ENCODE measurements at regions of chr22 and their contacts with region 1.

Region 1: GRCh38 chr22:30423982-30424963 is 1.3 kb upstream of the MTFP1 start:
- DNase-seq: peak; percentile 98
- H3K4me3 Mint-ChIP-seq: peak overlapping the region; percentile 95
- H3K27ac Mint-ChIP-seq: peak overlapping the region; percentile 99
- H3K4me1 Mint-ChIP-seq: peaks cover 57% of the 10 kb centered on the region
- H3K27me3 Mint-ChIP-seq: no peaks in the 10 kb centered on the region

Region 2: DNA sequence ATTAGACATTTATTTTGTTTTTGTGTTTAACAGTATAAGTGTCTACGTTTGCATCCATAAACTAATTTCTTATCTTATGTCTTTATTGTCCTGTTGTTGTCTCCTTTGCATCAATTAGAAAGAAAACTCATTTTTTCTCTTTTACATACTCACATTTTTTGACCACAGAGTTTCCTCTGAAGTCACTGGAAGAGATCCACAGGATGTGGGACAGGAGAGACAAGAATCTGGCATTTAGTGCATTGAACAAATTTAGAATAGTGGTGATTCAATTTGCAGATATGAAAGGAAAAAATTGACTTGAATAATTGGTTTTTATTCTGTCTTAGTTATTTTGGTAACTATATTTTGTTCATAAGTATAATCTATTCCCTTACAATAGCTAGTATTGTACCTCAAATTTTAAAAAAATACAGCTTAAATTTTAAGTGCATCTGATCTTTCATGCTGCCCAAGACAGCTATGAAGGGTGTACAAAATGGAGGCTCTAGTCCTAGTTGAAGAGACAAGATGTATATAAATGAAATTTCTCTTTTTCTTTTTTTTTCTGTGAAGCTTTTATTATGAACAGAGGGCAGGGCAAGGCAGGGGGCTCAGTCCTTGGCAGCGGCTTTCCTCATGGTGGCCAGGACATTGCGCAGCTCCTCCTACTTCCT is 319.6 kb before region 1 on chr22:
- intact Hi-C with region 1: loop called (anchors 10 kb)
- DNase-seq: no peak
- H3K4me3 Mint-ChIP-seq: peak overlapping the region; percentile 26
- H3K27ac Mint-ChIP-seq: peak overlapping the region; percentile 95
- H3K4me1 Mint-ChIP-seq: peaks cover 64% of the 10 kb centered on the region
- H3K27me3 Mint-ChIP-seq: no peaks in the 10 kb centered on the region

Region 3: GRCh38 chr22:30305519-30305905 is 118.8 kb before region 1 on chr22:
- intact Hi-C with region 1: loop called (anchors 5 kb)
- DNase-seq: peak; percentile 65
- H3K4me3 Mint-ChIP-seq: peak overlapping the region; percentile 70
- H3K27ac Mint-ChIP-seq: peak overlapping the region; percentile 87
- H3K4me1 Mint-ChIP-seq: peaks cover 89% of the 10 kb centered on the region
- H3K27me3 Mint-ChIP-seq: no peaks in the 10 kb centered on the region

Region 4: GRCh38 chr22:30386960-30387827 is 37.1 kb before region 1 on chr22 and contains the start of gene RNF215:
- intact Hi-C with region 1: loop called (anchors 1 kb)
- DNase-seq: peak; percentile 76
- H3K4me3 Mint-ChIP-seq: peak within 1 kb of the TSS; percentile 84
- H3K27ac Mint-ChIP-seq: peak within 1 kb of the TSS; percentile 69
- H3K4me1 Mint-ChIP-seq: peaks cover 23% of the 10 kb centered on the region
- H3K27me3 Mint-ChIP-seq: no peaks in the 10 kb centered on the region
- total RNA-seq, gene RNF215: 17.2 and 19.3 TPM in 2 replicates

Region 5: GRCh38 chr22:30485362-30485988 is 61.2 kb after region 1 on chr22:
- intact Hi-C with region 1: loop called (anchors 1 kb)
- DNase-seq: peak; percentile 68
- H3K4me3 Mint-ChIP-seq: no peak overlapping the region
- H3K27ac Mint-ChIP-seq: no peak overlapping the region
- H3K4me1 Mint-ChIP-seq: no peaks in the 10 kb centered on the region
- H3K27me3 Mint-ChIP-seq: no peaks in the 10 kb centered on the region

Measured in activated T-helper 2 cell treated with anti-CD3 and anti-CD28 coated beads, Interferon-gamma antibody, Interleukin-2, Interleukin-4, amounts not matched to agents 10 μg/mL and 5 μg/mL and 100 μg/mL, durations not matched to agents 14 hours and 24 hours and 36 hours (primary cell).